GM12878 (cell line): ENCODE measurements at regions of chr1 and their contacts with region 1.

Region 1: GRCh38 chr1:107963601-107964335 is 1.2 kb downstream of the VAV3 start:
- DNase-seq: peak; percentile 62
- ATAC-seq: peak; percentile 75
- H3K4me3 ChIP-seq: peak overlapping the region; percentile 87
- H3K27ac ChIP-seq: peak overlapping the region; percentile 48
- H3K4me1 ChIP-seq: peaks cover 10% of the 10 kb centered on the region
- H3K27me3 ChIP-seq: no peaks in the 10 kb centered on the region; a peak in 1 of 4 replicates
- CTCF ChIP-seq: no peak
- EP300 ChIP-seq: no peak
- POLR2A ChIP-seq: no peak
- RAD21 ChIP-seq: no peak

Region 2: GRCh38 chr1:107897438-107898345 is 66.1 kb before region 1 on chr1:
- CTCF ChIA-PET with region 1: interaction called, 3 read pairs
- POLR2A ChIA-PET with region 1: no interaction called
- RAD21 ChIA-PET with region 1: interaction called, 12 read pairs
- SMC1A ChIA-PET with region 1: no interaction called
- in situ Hi-C with region 1: no loop called
- intact Hi-C with region 1: no loop called
- DNase-seq: no peak
- ATAC-seq: peak; percentile 76
- H3K4me3 ChIP-seq: no peak overlapping the region
- H3K27ac ChIP-seq: no peak overlapping the region
- H3K4me1 ChIP-seq: peaks cover 14% of the 10 kb centered on the region
- H3K27me3 ChIP-seq: no peaks in the 10 kb centered on the region
- CTCF ChIP-seq: no peak; a peak in 1 of 6 replicates
- EP300 ChIP-seq: no peak
- POLR2A ChIP-seq: no peak
- RAD21 ChIP-seq: no peak

Region 3: DNA sequence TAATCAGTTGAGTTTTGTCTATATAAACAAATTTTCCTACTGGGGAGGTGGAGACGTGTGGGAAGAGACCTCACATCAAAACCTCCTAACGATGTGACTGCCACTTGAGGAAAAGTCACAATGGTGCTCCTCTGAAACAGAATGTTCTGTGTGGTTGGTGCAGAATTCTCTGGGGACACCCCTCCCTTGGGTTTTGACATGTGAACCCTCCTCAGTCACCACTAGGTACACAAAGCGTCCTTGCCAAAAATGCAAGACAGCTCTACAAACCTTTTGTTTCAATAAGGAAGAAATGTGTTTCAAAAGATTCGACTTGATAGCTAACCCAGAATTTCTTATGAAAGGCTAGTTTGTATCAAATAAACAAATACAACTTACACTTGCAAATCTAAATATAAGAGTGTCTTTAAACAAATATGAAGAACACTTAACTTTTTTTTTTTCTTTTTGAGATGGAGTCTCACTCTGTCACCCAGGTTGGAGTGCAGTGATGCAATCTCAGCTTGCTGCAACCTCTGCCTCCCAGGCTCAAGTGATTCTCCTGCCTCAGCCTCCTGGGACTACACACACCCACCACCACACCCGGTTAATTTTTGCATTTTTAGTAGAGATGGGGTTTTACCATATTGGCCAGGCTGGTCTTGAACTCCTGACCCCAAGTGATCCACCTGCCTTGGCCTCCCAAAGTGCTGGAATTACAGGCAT is 227.1 kb after region 1 on chr1:
- CTCF ChIA-PET with region 1: no interaction called
- POLR2A ChIA-PET with region 1: no interaction called
- RAD21 ChIA-PET with region 1: no interaction called
- SMC1A ChIA-PET with region 1: no interaction called
- in situ Hi-C with region 1: no loop called
- intact Hi-C with region 1: no loop called
- DNase-seq: no peak
- ATAC-seq: peak; percentile 62
- H3K4me3 ChIP-seq: no peak overlapping the region
- H3K27ac ChIP-seq: no peak overlapping the region
- H3K4me1 ChIP-seq: no peaks in the 10 kb centered on the region
- H3K27me3 ChIP-seq: no peaks in the 10 kb centered on the region
- CTCF ChIP-seq: no peak
- EP300 ChIP-seq: no peak
- POLR2A ChIP-seq: no peak
- RAD21 ChIP-seq: no peak